Heart left ventricle (tissue), 16 donors: ENCODE measurements at regions of chr10 and their contacts with region 1.

Region 1: GRCh38 chr10:49407552-49408137 is 11.8 kb upstream of the DRGX start:
- DNase-seq: peak; percentile 67 to 88 (median 76)
- ATAC-seq: peak; percentile 44 to 86 (median 71)
- H3K4me3 ChIP-seq: no peak overlapping the region
- H3K27ac ChIP-seq: no peak overlapping the region
- H3K4me1 ChIP-seq: peaks cover 0 to 28% (median 5%) of the 10 kb centered on the region in 12 donors
- H3K27me3 ChIP-seq: peaks cover 0 to 32% (median 9%) of the 10 kb centered on the region in 9 donors
- CTCF ChIP-seq: peak; percentile 74 to 90 (median 87)
- POLR2A ChIP-seq: no peak

Region 2: GRCh38 chr10:48976196-48976595 is 431.4 kb before region 1 on chr10:
- intact Hi-C with region 1: loop called in 1 of 10 experiments (anchors 10 kb)
- DNase-seq: peak in 1 of 5 donors; percentile 38
- ATAC-seq: peak in 3 of 4 donors; percentile 67 to 73 (median 70)
- H3K4me3 ChIP-seq: no peak overlapping the region
- H3K27ac ChIP-seq: no peak overlapping the region
- H3K4me1 ChIP-seq: peaks cover 0 to 1% (median 0%) of the 10 kb centered on the region in 12 donors
- H3K27me3 ChIP-seq: no peaks in the 10 kb centered on the region
- CTCF ChIP-seq: peak in 10 of 12 donors; percentile 20 to 53 (median 38)
- POLR2A ChIP-seq: no peak

Region 3: GRCh38 chr10:48990226-48990625 is 417.4 kb before region 1 on chr10:
- intact Hi-C with region 1: loop called in 1 of 10 experiments (anchors 10 kb)
- DNase-seq: no peak
- ATAC-seq: no peak
- H3K4me3 ChIP-seq: no peak overlapping the region
- H3K27ac ChIP-seq: no peak overlapping the region
- H3K4me1 ChIP-seq: no peaks in the 10 kb centered on the region
- H3K27me3 ChIP-seq: no peaks in the 10 kb centered on the region
- CTCF ChIP-seq: no peak
- POLR2A ChIP-seq: no peak

Region 4: DNA sequence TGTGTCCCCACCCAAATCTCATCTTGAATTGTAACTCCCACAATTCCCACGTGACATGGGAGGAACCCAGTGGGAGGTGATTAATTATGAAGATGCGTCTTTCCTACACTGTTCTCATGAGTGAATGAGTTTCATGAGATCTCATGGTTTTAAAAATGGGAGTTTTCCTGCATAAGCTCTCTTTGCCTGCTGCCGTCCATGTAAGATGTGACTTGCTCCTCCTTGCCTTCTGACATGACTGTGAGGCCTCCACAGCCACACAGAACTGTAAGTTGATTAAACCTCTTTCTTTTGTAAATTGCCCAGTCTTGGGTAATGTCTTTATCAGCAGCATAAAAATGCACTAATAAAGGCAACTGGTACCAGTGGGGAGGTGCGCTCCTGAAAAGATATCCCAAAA is 56.0 kb after region 1 on chr10:
- intact Hi-C with region 1: loop called in 1 of 10 experiments (anchors 5 kb)
- DNase-seq: no peak
- ATAC-seq: no peak
- H3K4me3 ChIP-seq: no peak overlapping the region
- H3K27ac ChIP-seq: no peak overlapping the region
- H3K4me1 ChIP-seq: no peaks in the 10 kb centered on the region
- H3K27me3 ChIP-seq: no peaks in the 10 kb centered on the region
- CTCF ChIP-seq: no peak
- POLR2A ChIP-seq: no peak

Region 5: DNA sequence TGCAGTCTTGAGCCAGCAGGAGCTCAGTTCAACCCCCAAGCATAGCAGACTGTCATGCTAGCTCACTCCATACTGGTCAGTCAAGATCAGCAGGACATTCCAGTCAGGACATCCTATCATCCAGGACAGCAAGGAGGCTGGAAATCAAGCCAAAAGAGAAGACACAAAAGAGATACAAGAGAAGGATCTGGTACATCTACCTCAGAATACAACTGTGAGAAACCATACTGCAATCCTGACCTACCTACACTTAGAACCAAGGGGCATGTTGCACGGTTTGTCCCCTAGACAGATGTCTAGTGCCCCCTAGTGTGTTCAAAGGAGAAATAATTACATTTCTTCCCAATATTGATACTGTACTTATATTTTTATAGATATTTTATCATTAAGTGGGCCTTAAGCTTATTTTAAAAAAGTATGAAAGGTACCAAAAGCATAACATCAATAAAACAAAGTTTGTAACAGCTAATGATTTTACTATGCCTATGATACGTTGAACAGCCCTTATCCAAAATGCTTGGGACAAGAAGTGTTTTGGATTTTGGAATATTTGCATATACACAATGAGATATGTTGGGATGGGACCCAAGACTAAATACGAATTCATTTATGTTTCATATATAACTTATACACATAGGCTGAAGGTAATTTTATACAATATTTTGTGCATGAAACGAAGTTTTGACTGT is 104.6 kb after region 1 on chr10:
- intact Hi-C with region 1: loop called (anchors 2 to 5 kb)
- DNase-seq: no peak
- ATAC-seq: peak in 3 of 4 donors; percentile 34 to 51 (median 50)
- H3K4me3 ChIP-seq: no peak overlapping the region
- H3K27ac ChIP-seq: no peak overlapping the region
- H3K4me1 ChIP-seq: peaks cover 0 to 17% (median 5%) of the 10 kb centered on the region in 12 donors
- H3K27me3 ChIP-seq: no peaks in the 10 kb centered on the region
- CTCF ChIP-seq: peak; percentile 44 to 71 (median 64)
- POLR2A ChIP-seq: no peak

Region 6: DNA sequence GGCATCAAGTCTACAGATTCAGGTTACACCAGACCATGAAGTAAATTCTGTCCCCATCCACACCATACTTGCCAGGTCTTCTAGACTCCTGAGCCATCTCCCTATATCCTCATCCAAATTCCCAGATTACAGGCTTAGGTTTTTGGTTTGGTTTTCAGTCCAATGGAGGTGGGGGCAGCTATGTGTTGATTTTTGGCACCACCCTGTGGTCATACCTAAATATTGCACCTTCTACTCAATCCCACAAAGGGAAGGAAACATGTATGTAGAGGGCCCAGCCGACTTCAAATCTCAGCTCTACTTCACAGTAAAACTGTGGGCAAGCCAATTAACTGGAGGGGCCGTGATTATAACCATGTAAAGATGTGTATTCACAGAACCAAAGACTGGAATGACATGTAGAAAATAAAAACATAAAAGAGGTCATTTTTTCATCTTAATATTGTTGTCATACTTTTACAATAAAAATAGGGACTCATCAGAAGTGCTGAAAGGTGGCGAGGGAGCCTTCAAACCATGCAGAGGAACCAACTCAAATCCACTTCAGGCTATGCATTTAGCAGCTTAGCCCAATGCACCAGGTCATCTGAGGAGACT is 111.4 kb after region 1 on chr10:
- intact Hi-C with region 1: loop called in 7 of 10 experiments (anchors 2 to 5 kb)
- DNase-seq: peak in 1 of 5 donors; percentile 13
- ATAC-seq: peak; percentile 52 to 73 (median 62)
- H3K4me3 ChIP-seq: no peak overlapping the region
- H3K27ac ChIP-seq: no peak overlapping the region
- H3K4me1 ChIP-seq: peaks cover 0 to 33% (median 7%) of the 10 kb centered on the region in 12 donors
- H3K27me3 ChIP-seq: no peaks in the 10 kb centered on the region
- CTCF ChIP-seq: peak; percentile 55 to 74 (median 66)
- POLR2A ChIP-seq: no peak

Region 7: GRCh38 chr10:49571388-49571787 is 163.7 kb after region 1 on chr10:
- intact Hi-C with region 1: no loop called
- DNase-seq: no peak
- ATAC-seq: no peak
- H3K4me3 ChIP-seq: no peak overlapping the region
- H3K27ac ChIP-seq: no peak overlapping the region
- H3K4me1 ChIP-seq: no peaks in the 10 kb centered on the region
- H3K27me3 ChIP-seq: no peaks in the 10 kb centered on the region
- CTCF ChIP-seq: no peak
- POLR2A ChIP-seq: no peak